ENCODE measurements at regions of chr2 and their contacts with region 1.

Region 1: GRCh38 chr2:68115965-68116364 is 41.7 kb upstream of the PNO1 start:
- DNase-seq: no peak
- H3K4me3 ChIP-seq: no peak overlapping the region
- H3K27ac ChIP-seq: no peak overlapping the region
- H3K4me1 ChIP-seq: no peaks in the 10 kb centered on the region
- H3K27me3 ChIP-seq: no peaks in the 10 kb centered on the region
- CTCF ChIP-seq: no peak
- POLR2A ChIP-seq: no peak

Region 2: GRCh38 chr2:66596256-66596655 is 1519.7 kb before region 1 on chr2:
- intact Hi-C with region 1: loop called (anchors 5 kb)
- DNase-seq: no peak
- H3K4me3 ChIP-seq: no peak overlapping the region
- H3K27ac ChIP-seq: no peak overlapping the region
- H3K4me1 ChIP-seq: no peaks in the 10 kb centered on the region
- H3K27me3 ChIP-seq: no peaks in the 10 kb centered on the region
- CTCF ChIP-seq: no peak
- POLR2A ChIP-seq: no peak